H1 (cell line): ENCODE measurements at regions of chr5 and their contacts with region 1.

Region 1: DNA sequence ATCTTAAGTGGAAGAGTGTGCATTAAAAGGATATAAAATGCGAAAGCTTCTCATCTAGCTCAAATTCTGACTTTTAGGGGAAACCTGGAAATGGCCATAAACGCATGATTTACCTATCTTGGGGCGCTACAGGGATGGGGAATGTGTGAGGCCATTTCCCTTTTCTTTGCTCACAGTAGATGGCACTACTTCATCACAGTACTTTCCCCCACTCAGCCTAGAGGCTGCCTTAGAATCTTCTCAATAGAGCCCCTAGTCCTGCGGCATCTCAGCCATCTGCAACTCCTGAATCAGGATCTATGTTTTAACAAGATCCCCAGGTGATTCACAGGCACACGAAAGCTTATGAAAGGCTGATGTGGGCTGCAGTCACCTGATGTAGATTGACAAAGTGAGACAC is 110.8 kb downstream of the LHFPL2 start:
- DNase-seq: no peak
- H3K4me3 ChIP-seq: no peak overlapping the region
- H3K27ac ChIP-seq: no peak overlapping the region
- H3K4me1 ChIP-seq: peaks cover 9 to 21% (median 10%) of the 10 kb centered on the region in 4 experiments
- H3K27me3 ChIP-seq: no peaks in the 10 kb centered on the region
- CTCF ChIP-seq: peak; percentile 1 to 74 (median 73)
- EP300 ChIP-seq: no peak
- POLR2A ChIP-seq: no peak
- RAD21 ChIP-seq: peak; percentile 93 to 94

Region 2: DNA sequence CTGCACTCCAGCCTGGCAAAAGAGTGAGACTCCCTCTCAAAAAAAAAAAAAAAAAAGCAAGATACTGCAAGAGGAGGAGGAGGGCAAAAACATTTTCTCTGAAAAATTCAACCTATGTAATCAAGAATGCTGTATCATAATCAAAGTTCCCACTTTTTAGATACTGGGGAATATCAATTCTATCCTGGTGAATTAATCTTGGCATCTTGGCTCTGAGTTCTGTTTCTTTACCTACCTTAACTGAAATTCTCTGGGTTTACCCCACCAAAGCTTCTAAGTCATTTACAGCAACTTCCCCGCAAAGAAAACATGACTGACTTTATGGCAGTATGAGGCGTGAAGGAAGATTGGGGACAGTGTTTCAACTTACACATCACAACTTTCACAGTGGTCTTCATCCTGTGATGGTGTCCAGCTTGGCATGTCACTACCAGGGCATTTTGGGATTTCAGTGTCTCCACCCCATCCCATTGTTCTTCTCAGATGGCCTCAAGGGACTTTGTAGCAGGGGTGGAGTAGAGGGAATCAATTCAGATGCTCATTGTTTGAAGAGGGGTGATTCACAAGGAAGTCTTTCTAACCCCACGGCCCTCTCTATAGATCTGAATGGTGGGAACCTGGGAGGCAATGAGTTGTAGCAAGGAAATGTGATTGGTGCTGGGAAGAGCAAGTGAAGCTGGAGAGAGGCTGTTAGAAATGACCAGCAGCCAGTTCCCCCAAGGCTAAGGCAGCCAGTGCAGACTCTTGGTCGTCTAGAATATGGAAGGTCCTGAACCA is 46.9 kb before region 1 on chr5:
- CTCF ChIA-PET with region 1: interaction called, 10 read pairs
- POLR2A ChIA-PET with region 1: no interaction called
- DNase-seq: no peak
- H3K4me3 ChIP-seq: no peak overlapping the region
- H3K27ac ChIP-seq: no peak overlapping the region
- H3K4me1 ChIP-seq: peaks cover 0 to 10% (median 7%) of the 10 kb centered on the region in 4 experiments; a peak in 5 of 7 replicates
- H3K27me3 ChIP-seq: no peaks in the 10 kb centered on the region
- CTCF ChIP-seq: no peak
- EP300 ChIP-seq: no peak
- POLR2A ChIP-seq: no peak
- RAD21 ChIP-seq: no peak

Region 3: DNA sequence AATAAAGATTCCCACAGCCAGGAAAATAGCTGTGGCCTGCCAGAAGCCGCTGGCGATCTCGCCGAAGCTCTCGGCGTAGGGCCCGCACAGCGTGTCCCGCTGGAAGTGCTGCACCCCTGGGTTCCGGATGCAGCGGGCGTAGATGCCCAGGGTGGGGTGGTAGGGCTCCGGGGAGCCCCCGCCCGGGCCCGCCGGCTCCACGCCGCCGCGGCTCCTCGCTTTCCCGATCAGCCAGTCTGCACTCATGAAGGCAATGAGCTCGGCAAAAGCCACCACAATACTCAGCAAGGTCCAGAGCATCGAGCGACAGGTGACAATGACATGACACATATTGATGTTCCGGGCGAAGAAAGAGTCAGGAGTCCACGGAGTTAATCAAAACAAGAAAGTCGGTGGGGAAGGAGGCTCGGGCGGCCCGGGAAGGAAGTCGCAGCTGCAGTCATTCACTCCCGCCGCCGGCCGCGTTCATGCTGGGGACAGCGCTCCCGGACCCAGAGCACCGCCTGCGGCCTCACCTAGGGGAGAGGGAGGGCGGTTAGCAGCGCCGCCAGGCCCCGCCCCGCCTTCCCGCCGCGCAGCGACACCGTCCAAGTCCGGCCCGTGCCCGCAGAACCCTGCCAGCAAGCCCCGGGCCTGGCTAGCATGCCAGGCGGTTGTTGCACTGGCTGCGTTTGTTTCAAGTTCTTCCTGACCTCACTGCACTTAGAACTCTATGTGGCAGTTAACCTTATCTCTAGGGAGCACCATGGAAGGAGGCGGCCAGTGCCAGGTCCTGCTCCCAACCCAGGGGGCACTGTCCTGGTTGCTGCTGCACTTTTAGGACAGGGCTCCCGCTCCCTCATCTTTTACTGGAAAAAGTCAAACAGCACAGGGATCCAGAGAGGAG is 27.7 kb before region 1 on chr5:
- CTCF ChIA-PET with region 1: interaction called, 31 read pairs
- POLR2A ChIA-PET with region 1: interaction called, 3 read pairs
- DNase-seq: peak in 1 of 2 experiments; percentile 82
- H3K4me3 ChIP-seq: peak overlapping the region; percentile 16 to 54 (median 37); a peak in 5 of 8 replicates
- H3K27ac ChIP-seq: no peak overlapping the region
- H3K4me1 ChIP-seq: peaks cover 5 to 19% (median 9%) of the 10 kb centered on the region in 4 experiments
- H3K27me3 ChIP-seq: no peaks in the 10 kb centered on the region
- CTCF ChIP-seq: peak in 2 of 3 experiments; percentile 19 to 28; a peak in 2 of 4 replicates
- EP300 ChIP-seq: no peak
- POLR2A ChIP-seq: no peak
- RAD21 ChIP-seq: peak in 1 of 2 experiments; percentile 16; a peak in 1 of 4 replicates

Region 4: DNA sequence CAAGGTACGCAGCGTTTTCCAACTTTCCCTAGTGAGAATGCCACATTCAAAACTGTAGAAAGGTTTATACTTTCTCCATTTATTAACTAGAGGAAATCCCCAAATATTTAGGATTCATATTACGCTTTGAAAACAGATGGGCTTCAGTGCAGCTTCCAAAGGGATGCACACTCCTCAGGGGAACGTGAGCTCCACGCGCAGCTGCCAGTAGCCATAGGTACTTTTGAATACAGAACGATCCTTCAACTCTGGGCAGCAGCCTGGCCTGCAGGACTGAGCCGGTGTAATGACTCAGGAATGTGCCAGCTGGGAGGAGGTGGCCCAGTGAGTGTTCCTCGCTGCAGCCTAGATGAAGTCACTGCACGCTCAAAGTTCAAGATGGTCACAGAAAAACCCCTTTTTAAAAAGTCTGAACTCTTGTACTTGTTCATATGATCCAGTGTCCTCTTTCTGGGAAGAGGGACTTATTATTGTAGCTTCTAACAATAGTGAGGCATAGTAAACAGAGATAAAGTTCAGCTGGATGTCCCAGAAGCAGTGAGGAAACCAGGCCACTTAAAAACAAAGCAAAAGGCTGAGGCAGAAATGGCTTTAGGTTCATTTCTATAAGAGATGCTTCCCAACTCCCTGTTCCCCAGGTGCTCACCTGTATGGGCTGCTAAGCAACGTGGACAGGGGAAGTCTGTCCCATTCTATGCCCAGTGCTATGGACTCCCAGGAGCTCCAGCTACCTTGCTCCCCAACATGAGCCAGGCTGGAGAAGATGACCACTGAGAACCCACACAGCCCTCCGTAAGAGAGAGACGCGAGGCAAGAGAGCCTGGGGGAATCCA is 19.2 kb before region 1 on chr5:
- CTCF ChIA-PET with region 1: interaction called, 15 read pairs
- POLR2A ChIA-PET with region 1: interaction called, 3 read pairs
- DNase-seq: no peak
- H3K4me3 ChIP-seq: no peak overlapping the region
- H3K27ac ChIP-seq: no peak overlapping the region
- H3K4me1 ChIP-seq: peaks cover 0 to 6% (median 2%) of the 10 kb centered on the region in 4 experiments; a peak in 4 of 7 replicates
- H3K27me3 ChIP-seq: no peaks in the 10 kb centered on the region
- CTCF ChIP-seq: no peak
- EP300 ChIP-seq: no peak
- POLR2A ChIP-seq: no peak
- RAD21 ChIP-seq: no peak

Region 5: GRCh38 chr5:78586251-78586650 is 48.4 kb after region 1 on chr5:
- CTCF ChIA-PET with region 1: no interaction called
- POLR2A ChIA-PET with region 1: no interaction called
- DNase-seq: no peak
- H3K4me3 ChIP-seq: 0 out of 8 replicates have a peak overlapping the region, but pooled peaks of 1 of the 4 experiments have one; percentile 1
- H3K27ac ChIP-seq: no peak overlapping the region
- H3K4me1 ChIP-seq: no peaks in the 10 kb centered on the region
- H3K27me3 ChIP-seq: no peaks in the 10 kb centered on the region
- CTCF ChIP-seq: no peak
- EP300 ChIP-seq: no peak
- POLR2A ChIP-seq: no peak
- RAD21 ChIP-seq: no peak

Region 6: GRCh38 chr5:78627175-78627574 is 89.4 kb after region 1 on chr5:
- CTCF ChIA-PET with region 1: interaction called, 36 read pairs
- POLR2A ChIA-PET with region 1: no interaction called
- DNase-seq: no peak
- H3K4me3 ChIP-seq: no peak overlapping the region
- H3K27ac ChIP-seq: no peak overlapping the region
- H3K4me1 ChIP-seq: peaks cover 0 to 4% (median 0%) of the 10 kb centered on the region in 4 experiments; a peak in 1 of 7 replicates
- H3K27me3 ChIP-seq: no peaks in the 10 kb centered on the region
- CTCF ChIP-seq: peak in 2 of 3 experiments; percentile 45 to 50; a peak in 2 of 4 replicates
- EP300 ChIP-seq: no peak
- POLR2A ChIP-seq: no peak
- RAD21 ChIP-seq: peak; percentile 70 to 74

Region 7: DNA sequence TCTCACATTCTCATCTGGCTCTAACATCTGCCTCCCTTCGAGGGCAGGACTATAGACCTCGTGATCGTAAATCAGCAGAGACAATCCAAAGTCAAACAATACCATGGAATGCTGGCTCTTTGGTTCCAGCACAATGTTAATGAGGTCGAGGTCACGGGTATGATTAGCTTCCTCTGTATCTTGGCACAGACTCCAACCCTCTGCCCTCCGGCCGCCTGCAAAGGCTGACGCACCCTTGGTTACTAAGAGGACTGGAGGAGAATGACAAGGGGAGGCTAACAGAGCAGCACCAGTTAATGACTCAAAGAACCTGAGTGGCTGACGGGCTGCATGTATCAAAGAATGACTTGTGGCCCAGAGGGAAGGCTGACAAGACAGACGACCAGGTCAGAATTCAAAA is 100.6 kb after region 1 on chr5:
- CTCF ChIA-PET with region 1: interaction called, 14 read pairs
- POLR2A ChIA-PET with region 1: no interaction called
- DNase-seq: no peak
- H3K4me3 ChIP-seq: no peak overlapping the region
- H3K27ac ChIP-seq: no peak overlapping the region
- H3K4me1 ChIP-seq: peaks cover 2 to 20% (median 12%) of the 10 kb centered on the region in 4 experiments
- H3K27me3 ChIP-seq: peaks cover 0 to 1% (median 0%) of the 10 kb centered on the region in 4 experiments; a peak in 1 of 7 replicates
- CTCF ChIP-seq: no peak
- EP300 ChIP-seq: no peak
- POLR2A ChIP-seq: no peak
- RAD21 ChIP-seq: no peak

Region 8: GRCh38 chr5:78899922-78900362 is 362.1 kb after region 1 on chr5:
- CTCF ChIA-PET with region 1: interaction called, 10 read pairs
- POLR2A ChIA-PET with region 1: no interaction called
- DNase-seq: peak; percentile 53 to 79
- H3K4me3 ChIP-seq: no peak overlapping the region
- H3K27ac ChIP-seq: no peak overlapping the region
- H3K4me1 ChIP-seq: peaks cover 0 to 3% (median 0%) of the 10 kb centered on the region in 4 experiments; a peak in 1 of 7 replicates
- H3K27me3 ChIP-seq: no peaks in the 10 kb centered on the region
- CTCF ChIP-seq: peak; percentile 42 to 91 (median 82)
- EP300 ChIP-seq: no peak
- POLR2A ChIP-seq: no peak
- RAD21 ChIP-seq: peak; percentile 97 to 99